Posterior vena cava (tissue), 2 donors: ENCODE measurements at regions of chr1 and their contacts with region 1.

Region 1: GRCh38 chr1:222455188-222455879 is 92.6 kb downstream of the HHIPL2 start:
- DNase-seq: peak; percentile 96

Region 2: GRCh38 chr1:221478050-221478949 is 977.0 kb before region 1 on chr1:
- intact Hi-C with region 1: loop called in 1 of 2 experiments (anchors 10 kb)
- DNase-seq: peak; percentile 82

Region 3: DNA sequence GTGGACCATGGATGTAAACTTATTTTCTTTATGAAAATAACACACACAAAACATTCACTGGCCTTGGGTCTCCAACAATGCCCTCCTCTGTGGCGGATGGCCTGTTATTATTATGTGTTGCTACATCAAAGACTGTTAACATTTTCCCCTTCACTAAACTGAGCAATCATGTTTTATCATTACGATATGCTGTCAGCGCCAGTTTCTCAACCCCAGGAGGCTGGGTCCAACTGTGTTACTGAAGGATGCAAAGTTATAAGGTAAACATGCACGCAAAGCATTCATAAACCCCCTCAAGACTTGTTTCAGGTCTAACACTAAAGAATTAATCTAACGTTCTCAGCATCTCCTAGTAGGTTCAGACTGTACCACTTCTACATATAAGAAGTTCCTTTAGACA is 707.5 kb before region 1 on chr1:
- intact Hi-C with region 1: loop called in 1 of 2 experiments (anchors 5 kb)
- DNase-seq: no peak

Region 4: DNA sequence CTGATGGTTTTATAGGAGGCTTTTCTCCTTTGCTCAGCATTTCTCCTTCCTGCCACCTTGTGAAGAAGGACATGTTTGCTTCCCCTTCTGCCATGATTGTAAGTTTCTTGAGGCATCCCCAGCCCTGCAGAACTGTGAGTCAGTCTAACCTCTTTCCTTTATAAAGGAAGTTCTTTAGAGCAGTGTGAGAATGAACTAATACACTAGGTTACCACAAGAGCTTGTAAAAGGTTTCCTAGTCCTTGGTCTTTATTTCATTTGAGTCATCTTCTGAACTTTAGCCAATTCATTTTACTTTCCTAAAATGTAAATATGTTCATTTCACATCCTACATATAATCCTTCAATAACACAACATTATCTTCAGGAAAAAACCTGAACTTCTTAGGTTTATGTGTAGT is 272.7 kb before region 1 on chr1:
- intact Hi-C with region 1: no loop called
- DNase-seq: no peak

Region 5: GRCh38 chr1:222852326-222852725 is 397.0 kb after region 1 on chr1:
- intact Hi-C with region 1: no loop called
- DNase-seq: no peak